ENCODE measurements at regions of chr3 and their contacts with region 1.

Region 1: GRCh38 chr3:129627429-129628168 is 21.1 kb upstream of the PLXND1 start:
- DNase-seq: peak; percentile 78 to 89
- ATAC-seq: peak; percentile 57 to 63
- H3K4me3 ChIP-seq: peak overlapping the region; percentile 52
- H3K27ac ChIP-seq: peak overlapping the region; percentile 99 to 100
- H3K4me1 ChIP-seq: peaks cover 46% of the 10 kb centered on the region
- CTCF ChIP-seq: peak; percentile 78
- EP300 ChIP-seq: no peak
- POLR2A ChIP-seq: peak; percentile 41; the same call in 1 of the 2 replicates
- RAD21 ChIP-seq: peak; percentile 91 to 93

Region 2: GRCh38 chr3:129490242-129491045 is 137.2 kb before region 1 on chr3:
- CTCF ChIA-PET with region 1: interaction called, 11 read pairs
- POLR2A ChIA-PET with region 1: interaction called, 8 read pairs
- DNase-seq: peak; percentile 83 to 89
- ATAC-seq: peak; percentile 89 to 93
- H3K4me3 ChIP-seq: no peak overlapping the region
- H3K27ac ChIP-seq: peak overlapping the region; percentile 89 to 92
- H3K4me1 ChIP-seq: peaks cover 22% of the 10 kb centered on the region
- CTCF ChIP-seq: peak; percentile 87
- EP300 ChIP-seq: no peak
- POLR2A ChIP-seq: no peak
- RAD21 ChIP-seq: peak; percentile 93 to 95

Region 3: GRCh38 chr3:129606636-129607390 is 20.8 kb before region 1 on chr3 and contains the start of gene PLXND1:
- CTCF ChIA-PET with region 1: interaction called, 7 read pairs
- POLR2A ChIA-PET with region 1: interaction called, 10 read pairs
- DNase-seq: peak; percentile 53 to 57
- ATAC-seq: peak; percentile 35 to 61
- H3K4me3 ChIP-seq: peak within 1 kb of the TSS; percentile 89
- H3K27ac ChIP-seq: peak within 1 kb of the TSS; percentile 96 to 97
- H3K4me1 ChIP-seq: peaks cover 63% of the 10 kb centered on the region
- CTCF ChIP-seq: no peak
- EP300 ChIP-seq: no peak
- POLR2A ChIP-seq: peak; percentile 27
- RAD21 ChIP-seq: no peak
- polyA plus RNA-seq, gene PLXND1: 26.8 and 49.3 TPM in 2 replicates

Region 4: GRCh38 chr3:129638481-129638880 is 10.9 kb after region 1 on chr3:
- CTCF ChIA-PET with region 1: interaction called, 11 read pairs
- POLR2A ChIA-PET with region 1: interaction called, 4 read pairs
- DNase-seq: no peak
- ATAC-seq: no peak
- H3K4me3 ChIP-seq: no peak overlapping the region
- H3K27ac ChIP-seq: peak overlapping the region in 1 of 2 experiments; percentile 56; a peak in 4 of 6 replicates
- H3K4me1 ChIP-seq: peaks cover 19% of the 10 kb centered on the region
- CTCF ChIP-seq: no peak
- EP300 ChIP-seq: no peak
- POLR2A ChIP-seq: no peak
- RAD21 ChIP-seq: no peak

Region 5: DNA sequence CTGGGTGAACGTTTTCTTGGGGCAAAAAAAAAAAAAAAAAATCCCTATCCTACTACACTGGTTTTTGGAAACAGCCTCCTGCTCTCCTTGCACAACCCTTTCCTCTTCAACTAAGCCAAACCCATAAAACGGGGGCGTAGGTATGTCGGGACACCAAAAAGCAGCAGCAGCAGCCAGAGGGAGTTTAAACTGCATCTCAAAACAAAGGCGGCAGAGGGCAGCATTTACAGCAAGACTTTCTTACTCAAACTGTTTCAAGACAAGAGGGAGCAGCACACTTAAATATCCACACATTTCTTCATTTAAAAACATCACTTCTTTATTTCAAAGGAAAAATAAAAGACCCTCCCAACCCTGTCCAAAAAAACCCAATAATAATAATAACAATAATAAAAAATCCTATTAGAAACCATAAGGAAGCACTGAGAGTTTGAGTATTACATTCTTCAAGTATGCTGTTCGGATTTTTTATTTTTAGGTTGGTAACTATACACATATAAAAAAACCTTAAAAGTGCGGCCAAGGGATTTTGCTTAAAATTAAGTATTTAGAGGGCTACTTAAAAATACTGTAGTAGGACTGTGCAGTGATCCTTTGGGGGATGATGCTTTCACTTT is 22.8 kb after region 1 on chr3:
- CTCF ChIA-PET with region 1: interaction called, 10 read pairs
- POLR2A ChIA-PET with region 1: no interaction called
- DNase-seq: peak; percentile 18 to 75
- ATAC-seq: peak; percentile 53 to 64; a peak in 4 of 6 replicates
- H3K4me3 ChIP-seq: no peak overlapping the region
- H3K27ac ChIP-seq: peak overlapping the region; percentile 93
- H3K4me1 ChIP-seq: peaks cover 64% of the 10 kb centered on the region
- CTCF ChIP-seq: peak; percentile 69
- EP300 ChIP-seq: no peak
- POLR2A ChIP-seq: no peak
- RAD21 ChIP-seq: peak; percentile 80 to 82

Region 6: GRCh38 chr3:129809297-129809696 is 181.7 kb after region 1 on chr3:
- CTCF ChIA-PET with region 1: interaction called, 16 read pairs
- POLR2A ChIA-PET with region 1: no interaction called
- DNase-seq: no peak
- ATAC-seq: no peak
- H3K4me3 ChIP-seq: no peak overlapping the region
- H3K27ac ChIP-seq: no peak overlapping the region
- H3K4me1 ChIP-seq: 0 out of 3 replicates have a peak, but pooled peaks cover 4% of the 10 kb centered on the region
- CTCF ChIP-seq: no peak
- EP300 ChIP-seq: no peak
- POLR2A ChIP-seq: no peak
- RAD21 ChIP-seq: no peak

Region 7: DNA sequence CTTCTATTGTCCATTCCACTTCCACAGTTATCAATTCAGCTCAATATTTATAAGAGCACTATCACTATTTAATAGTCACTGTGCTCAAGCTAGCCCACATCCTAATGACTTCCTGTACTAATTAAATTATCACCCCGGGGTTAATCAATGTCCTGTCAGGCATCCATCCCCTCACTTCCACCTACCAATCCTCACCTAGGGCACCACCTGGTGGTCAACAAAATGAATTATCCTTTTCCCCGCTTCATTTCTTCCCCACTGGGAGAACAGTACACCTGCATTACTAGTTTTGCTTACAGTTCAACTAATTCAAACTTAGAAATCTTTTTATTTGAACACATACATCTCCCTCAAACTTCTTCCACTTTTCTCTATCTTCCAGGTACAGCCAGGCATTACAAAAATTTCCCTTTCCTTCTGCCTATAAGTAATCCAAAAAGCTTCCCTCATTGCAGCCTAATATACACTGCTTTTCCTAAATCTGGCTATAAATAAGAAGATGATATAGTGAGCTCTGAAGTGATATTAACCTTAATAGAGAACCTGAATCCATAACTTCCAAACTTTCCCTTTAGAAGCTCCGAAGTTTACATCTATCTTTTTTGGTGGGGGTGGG is 197.4 kb after region 1 on chr3:
- CTCF ChIA-PET with region 1: interaction called, 178 read pairs
- POLR2A ChIA-PET with region 1: interaction called, 5 read pairs
- DNase-seq: peak; percentile 32 to 69
- ATAC-seq: peak in 1 of 2 experiments; percentile 78; a peak in 3 of 6 replicates
- H3K4me3 ChIP-seq: no peak overlapping the region
- H3K27ac ChIP-seq: peak overlapping the region; percentile 23 to 42; a peak in 3 of 6 replicates
- H3K4me1 ChIP-seq: peaks cover 54% of the 10 kb centered on the region
- CTCF ChIP-seq: peak; percentile 81
- EP300 ChIP-seq: no peak
- POLR2A ChIP-seq: no peak
- RAD21 ChIP-seq: peak; percentile 86 to 87

Region 8: GRCh38 chr3:129888739-129889138 is 261.1 kb after region 1 on chr3:
- CTCF ChIA-PET with region 1: no interaction called
- POLR2A ChIA-PET with region 1: no interaction called
- DNase-seq: peak in 1 of 2 experiments; percentile 48
- ATAC-seq: peak in 1 of 2 experiments; percentile 14; a peak in 1 of 6 replicates
- H3K4me3 ChIP-seq: no peak overlapping the region
- H3K27ac ChIP-seq: peak overlapping the region in 1 of 2 experiments; percentile 23; a peak in 1 of 6 replicates
- H3K4me1 ChIP-seq: peaks cover 40% of the 10 kb centered on the region
- CTCF ChIP-seq: no peak
- EP300 ChIP-seq: no peak
- POLR2A ChIP-seq: no peak
- RAD21 ChIP-seq: no peak

Region 9: DNA sequence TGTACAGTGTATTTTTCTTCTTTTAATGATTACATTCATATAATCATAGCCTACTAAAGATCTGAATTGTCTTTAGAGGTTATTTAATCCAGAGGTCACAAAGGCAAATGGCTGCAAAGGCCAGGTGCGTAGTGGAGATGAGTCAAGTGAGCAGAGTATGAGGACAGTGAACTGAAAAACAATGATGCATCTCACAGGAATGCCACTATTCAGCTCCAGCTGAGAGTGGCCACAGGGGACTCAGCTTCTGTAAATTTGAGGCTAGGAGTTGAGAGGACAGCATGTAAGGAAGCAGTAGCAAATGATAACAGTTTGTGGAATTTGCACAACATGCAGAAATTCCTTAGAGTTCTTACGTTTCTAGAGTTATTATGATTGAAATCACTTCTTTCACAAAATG is 768.3 kb after region 1 on chr3:
- CTCF ChIA-PET with region 1: no interaction called
- POLR2A ChIA-PET with region 1: no interaction called
- DNase-seq: peak; percentile 1 to 15
- ATAC-seq: peak; percentile 54 to 73; a peak in 4 of 6 replicates
- H3K4me3 ChIP-seq: no peak overlapping the region
- H3K27ac ChIP-seq: no peak overlapping the region
- H3K4me1 ChIP-seq: no peaks in the 10 kb centered on the region
- CTCF ChIP-seq: no peak
- EP300 ChIP-seq: no peak
- POLR2A ChIP-seq: no peak
- RAD21 ChIP-seq: no peak

Measured in A549 (cell line).